GM18951 (cell line): ENCODE measurements at regions of chr3 and their contacts with region 1.

Region 1: GRCh38 chr3:109081746-109082510 is 36.0 kb downstream of the MORC1 start:
- POLR2A ChIP-seq: no peak

Region 2: GRCh38 chr3:109023656-109024254 is 58.2 kb before region 1 on chr3:
- in situ Hi-C with region 1: loop called (anchors 5 kb)
- POLR2A ChIP-seq: no peak